ENCODE measurements at regions of chr9 and their contacts with region 1.

Region 1: DNA sequence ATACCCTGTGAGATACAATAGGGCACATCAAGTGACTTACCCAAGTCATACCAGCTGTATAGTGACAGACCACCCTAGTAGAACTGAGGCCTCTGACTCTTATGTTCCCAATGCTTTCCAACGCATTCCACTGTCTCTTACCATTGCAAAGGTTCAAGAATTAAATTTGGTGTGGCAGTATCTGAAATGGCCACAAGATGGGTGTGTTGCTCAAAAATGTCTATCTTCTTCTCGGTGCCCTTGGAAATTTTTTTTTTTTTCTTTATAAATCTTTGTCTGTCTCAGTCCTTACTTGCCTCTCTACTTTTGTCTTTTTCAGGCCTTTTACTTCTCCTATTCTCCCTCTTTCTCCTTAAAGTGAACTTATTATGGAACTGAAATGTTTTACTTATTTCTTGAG is 48.4 kb downstream of the GPR21 start:
- DNase-seq: peak; percentile 22
- ATAC-seq: peak; percentile 73
- H3K4me3 ChIP-seq: no peak overlapping the region
- H3K27ac ChIP-seq: no peak overlapping the region
- H3K4me1 ChIP-seq: no peaks in the 10 kb centered on the region
- H3K27me3 ChIP-seq: no peaks in the 10 kb centered on the region
- CTCF ChIP-seq: peak; percentile 51 to 62 (median 57); a peak in 5 of 6 replicates
- POLR2A ChIP-seq: no peak
- RAD21 ChIP-seq: peak; percentile 66

Region 2: GRCh38 chr9:123225374-123225813 is 143.6 kb after region 1 on chr9:
- CTCF ChIA-PET with region 1: no interaction called
- POLR2A ChIA-PET with region 1: no interaction called
- RAD21 ChIA-PET with region 1: no interaction called
- intact Hi-C with region 1: loop called (anchors 1 kb)
- DNase-seq: peak; percentile 6
- ATAC-seq: peak; percentile 79
- H3K4me3 ChIP-seq: no peak overlapping the region
- H3K27ac ChIP-seq: no peak overlapping the region
- H3K4me1 ChIP-seq: no peaks in the 10 kb centered on the region
- H3K27me3 ChIP-seq: no peaks in the 10 kb centered on the region
- CTCF ChIP-seq: peak in 2 of 3 experiments; percentile 45 to 52; a peak in 3 of 6 replicates
- POLR2A ChIP-seq: no peak
- RAD21 ChIP-seq: peak; percentile 59

Region 3: GRCh38 chr9:123389070-123389469 is 307.2 kb after region 1 on chr9:
- CTCF ChIA-PET with region 1: no interaction called
- POLR2A ChIA-PET with region 1: no interaction called
- RAD21 ChIA-PET with region 1: no interaction called
- intact Hi-C with region 1: loop called (anchors 5 kb)
- DNase-seq: no peak
- ATAC-seq: no peak
- H3K4me3 ChIP-seq: no peak overlapping the region
- H3K27ac ChIP-seq: no peak overlapping the region
- H3K4me1 ChIP-seq: no peaks in the 10 kb centered on the region
- H3K27me3 ChIP-seq: no peaks in the 10 kb centered on the region
- CTCF ChIP-seq: no peak
- POLR2A ChIP-seq: no peak
- RAD21 ChIP-seq: no peak

Measured in HCT116 (cell line).